Aorta (tissue), 5 donors: ENCODE measurements at regions of chr9 and their contacts with region 1.

Region 1: GRCh38 chr9:92438900-92439526 is 14.7 kb upstream of the OMD start:
- DNase-seq: no peak
- ATAC-seq: no peak
- H3K4me3 ChIP-seq: no peak overlapping the region
- H3K27ac ChIP-seq: no peak overlapping the region
- H3K4me1 ChIP-seq: peaks cover 0 to 2% of the 10 kb centered on the region in 2 donors
- H3K27me3 ChIP-seq: no peaks in the 10 kb centered on the region

Region 2: DNA sequence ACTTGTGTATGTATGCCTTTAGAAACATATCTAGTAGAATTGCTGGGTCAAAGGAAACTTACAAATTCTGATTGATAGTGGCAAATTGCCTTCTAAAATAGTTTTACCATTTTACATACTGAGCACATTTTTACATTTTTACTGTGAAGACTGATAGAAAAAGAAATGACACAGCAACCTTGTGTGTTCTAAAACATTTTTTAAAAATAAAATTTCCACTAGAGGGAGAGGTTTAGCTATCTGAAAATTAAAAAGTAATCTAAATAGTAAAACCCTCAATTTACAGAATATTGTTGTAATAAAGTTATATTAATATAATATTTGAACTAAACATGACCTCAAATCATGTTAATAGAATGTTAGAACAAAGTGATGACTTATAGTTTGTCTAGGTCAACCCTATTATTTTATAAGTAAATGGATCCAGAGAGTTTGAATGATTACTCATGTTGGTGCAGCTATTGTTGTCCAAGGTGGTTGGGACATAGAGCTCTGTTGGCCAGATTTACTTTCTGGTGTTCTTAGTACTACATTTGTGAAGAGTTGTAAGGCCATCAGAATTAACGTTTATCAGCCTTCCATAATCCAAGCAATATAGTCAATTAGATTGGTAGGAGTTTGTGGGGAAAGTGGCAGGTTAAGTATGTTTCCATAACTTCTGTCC is 96.1 kb before region 1 on chr9:
- intact Hi-C with region 1: loop called (anchors 2 to 10 kb)
- DNase-seq: no peak
- ATAC-seq: no peak
- H3K4me3 ChIP-seq: no peak overlapping the region
- H3K27ac ChIP-seq: no peak overlapping the region
- H3K4me1 ChIP-seq: peaks cover 0 to 2% of the 10 kb centered on the region in 2 donors
- H3K27me3 ChIP-seq: no peaks in the 10 kb centered on the region

Region 3: GRCh38 chr9:92393686-92394085 is 45.3 kb before region 1 on chr9:
- intact Hi-C with region 1: no loop called
- DNase-seq: no peak
- ATAC-seq: peak; percentile 57
- H3K4me3 ChIP-seq: no peak overlapping the region
- H3K27ac ChIP-seq: peak overlapping the region in 1 of 2 donors; percentile 67
- H3K4me1 ChIP-seq: peaks cover 0 to 2% of the 10 kb centered on the region in 2 donors
- H3K27me3 ChIP-seq: no peaks in the 10 kb centered on the region

Region 4: GRCh38 chr9:92404042-92404836 is 34.8 kb before region 1 on chr9 and contains the start of gene OGN:
- intact Hi-C with region 1: loop called in 1 of 2 experiments (anchors 5 kb)
- DNase-seq: no peak
- ATAC-seq: no peak
- H3K4me3 ChIP-seq: peak within 1 kb of the TSS; percentile 84 to 98
- H3K27ac ChIP-seq: no peak within 1 kb of the TSS
- H3K4me1 ChIP-seq: peaks cover 2 to 6% of the 10 kb centered on the region in 2 donors
- H3K27me3 ChIP-seq: no peaks in the 10 kb centered on the region
- total RNA-seq, gene OGN: 175 to 318 TPM